AG04450 (cell line): ENCODE measurements at regions of chrX and their contacts with region 1.

Region 1: DNA sequence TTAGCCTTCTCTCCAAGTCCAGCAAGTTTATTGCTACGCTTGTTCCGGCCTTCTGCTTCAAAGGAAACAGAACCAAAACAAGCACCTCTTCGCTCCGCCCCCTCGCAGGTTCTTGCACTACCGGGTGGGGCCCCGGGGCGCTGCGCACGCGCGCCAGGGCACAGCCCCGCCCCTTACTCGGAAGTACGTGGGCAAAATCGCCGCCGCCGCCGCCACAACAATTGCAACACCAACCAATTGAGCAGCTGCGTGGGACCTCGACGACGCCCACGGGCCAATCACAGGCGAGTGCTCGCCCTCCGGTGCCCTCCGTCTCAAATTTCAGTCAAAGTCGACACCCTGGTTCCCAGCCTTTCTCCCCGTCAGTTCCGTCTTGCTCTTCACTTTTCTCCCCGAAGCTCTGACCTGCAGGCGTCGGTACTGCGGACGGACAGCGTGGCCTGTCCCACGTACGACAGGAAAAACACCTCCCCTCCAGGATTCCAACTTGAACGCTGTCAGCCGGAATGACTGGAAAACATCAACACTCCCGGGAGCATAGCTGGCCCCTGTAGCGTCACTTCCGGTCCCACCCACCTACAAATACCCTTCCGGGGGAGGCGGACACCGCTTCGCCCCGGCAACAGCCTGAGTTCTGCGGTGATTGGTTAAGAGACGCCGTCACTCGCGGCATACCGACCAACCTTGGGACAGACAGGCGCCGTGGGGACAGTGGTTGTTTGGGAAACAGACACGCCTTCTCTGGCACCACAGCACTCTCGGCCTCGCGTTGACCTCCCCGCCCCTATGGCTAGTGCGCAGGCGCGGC is 624 bp upstream of the OTUD5 start:
- DNase-seq: peak; percentile 96
- H3K4me3 ChIP-seq: peak overlapping the region; percentile 77
- H3K27ac ChIP-seq: peak overlapping the region; percentile 98
- H3K27me3 ChIP-seq: no peaks in the 10 kb centered on the region
- CTCF ChIP-seq: no peak

Region 2: GRCh38 chrX:48919947-48920717 is 37.9 kb before region 1 on chrX:
- CTCF ChIA-PET with region 1: no interaction called
- POLR2A ChIA-PET with region 1: interaction called, 12 read pairs
- DNase-seq: no peak
- H3K4me3 ChIP-seq: no peak overlapping the region
- H3K27ac ChIP-seq: no peak overlapping the region
- H3K27me3 ChIP-seq: no peaks in the 10 kb centered on the region
- CTCF ChIP-seq: no peak

Region 3: DNA sequence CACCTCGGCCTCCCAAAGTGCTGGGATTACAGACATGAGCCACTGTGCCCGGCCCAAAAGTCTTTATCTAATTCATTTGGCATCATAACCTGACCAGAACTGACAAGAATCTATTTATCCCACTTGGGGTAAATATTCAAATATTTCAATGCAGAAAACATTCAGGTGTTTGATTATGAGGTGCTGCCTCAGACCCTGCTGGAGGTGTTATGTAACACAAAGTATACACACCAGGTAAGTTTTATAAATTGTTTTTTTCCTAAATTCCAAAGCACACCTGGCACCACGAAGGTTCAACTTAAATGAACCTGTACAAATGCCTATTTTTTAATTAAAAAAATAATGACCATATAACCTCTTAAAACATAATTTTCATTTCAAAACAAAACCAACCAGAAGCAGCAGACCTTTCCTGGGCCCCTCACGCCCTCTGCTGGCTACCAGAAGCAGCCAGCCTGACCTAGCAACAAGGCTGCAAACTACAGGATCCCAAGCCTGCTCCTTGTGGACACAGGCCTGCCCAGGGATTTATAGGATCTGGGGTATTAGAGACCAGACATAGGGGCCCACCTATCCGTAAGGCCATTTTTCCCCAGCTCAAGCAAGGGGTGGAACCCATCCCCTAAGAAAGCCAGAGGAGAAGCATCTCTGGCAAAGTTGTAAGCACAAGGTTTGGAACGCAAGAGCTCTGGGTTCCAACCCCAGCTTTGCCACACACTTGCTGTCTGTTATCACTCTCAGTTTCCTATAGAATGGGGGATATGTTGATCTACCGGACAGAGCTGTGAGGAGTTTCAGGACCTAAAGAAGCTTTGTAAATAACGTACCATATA is 12.3 kb before region 1 on chrX:
- CTCF ChIA-PET with region 1: interaction called, 13 read pairs
- POLR2A ChIA-PET with region 1: no interaction called
- DNase-seq: peak; percentile 4
- H3K4me3 ChIP-seq: no peak overlapping the region
- H3K27ac ChIP-seq: no peak overlapping the region
- H3K27me3 ChIP-seq: no peaks in the 10 kb centered on the region
- CTCF ChIP-seq: peak; percentile 74

Region 4: DNA sequence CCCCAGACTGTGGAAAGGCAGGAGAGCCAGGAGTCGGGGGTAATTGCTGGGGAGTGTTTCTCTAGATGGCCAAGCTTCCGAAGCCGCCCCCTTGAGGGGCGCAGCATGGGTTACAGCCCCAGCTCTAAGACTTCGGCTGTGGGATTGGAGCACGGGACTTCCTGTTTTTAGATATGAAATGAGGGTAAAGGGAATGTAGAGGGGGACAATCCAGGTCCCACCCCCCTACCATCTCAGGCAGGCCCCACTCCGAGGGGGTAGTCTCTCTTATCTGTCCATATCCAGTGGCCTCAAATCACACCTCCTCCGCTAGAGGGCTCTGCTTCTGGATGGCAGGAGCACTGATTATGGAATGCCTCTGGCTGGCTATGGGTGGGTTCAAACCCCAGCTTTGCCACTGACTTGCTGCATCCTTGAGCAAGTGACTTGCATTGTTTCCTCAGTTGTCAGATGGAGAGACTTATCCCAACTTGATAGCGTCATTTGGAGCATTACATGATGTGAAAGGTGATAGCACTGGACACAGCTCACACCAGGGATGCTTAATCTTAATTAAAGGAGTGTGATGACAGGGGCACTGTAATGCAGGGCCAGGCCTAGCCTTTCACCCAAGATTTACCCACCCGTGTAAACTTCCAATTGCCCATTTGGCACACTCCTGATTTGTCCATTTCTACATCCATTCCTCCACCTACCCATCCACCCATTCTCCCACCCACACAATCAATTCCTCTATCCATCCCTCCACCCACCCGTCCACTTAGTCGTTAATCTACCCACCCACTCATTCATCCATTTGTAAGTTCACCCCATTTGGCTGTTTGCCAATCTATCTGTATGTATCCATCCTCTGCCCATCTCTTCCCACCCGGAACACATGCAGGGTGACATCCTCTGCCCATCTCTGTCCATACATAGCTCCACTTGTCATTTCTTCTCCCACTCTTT is 14.5 kb after region 1 on chrX:
- CTCF ChIA-PET with region 1: interaction called, 12 read pairs
- POLR2A ChIA-PET with region 1: interaction called, 9 read pairs
- DNase-seq: no peak
- H3K4me3 ChIP-seq: peak overlapping the region; percentile 53
- H3K27ac ChIP-seq: no peak overlapping the region
- H3K27me3 ChIP-seq: no peaks in the 10 kb centered on the region
- CTCF ChIP-seq: peak; percentile 59

Region 5: GRCh38 chrX:48992341-48992740 is 34.3 kb after region 1 on chrX:
- CTCF ChIA-PET with region 1: no interaction called
- POLR2A ChIA-PET with region 1: no interaction called
- DNase-seq: no peak
- H3K4me3 ChIP-seq: no peak overlapping the region
- H3K27ac ChIP-seq: no peak overlapping the region
- H3K27me3 ChIP-seq: no peaks in the 10 kb centered on the region
- CTCF ChIP-seq: no peak

Region 6: GRCh38 chrX:49043220-49043986 is 85.4 kb after region 1 on chrX and contains the start of gene TFE3:
- CTCF ChIA-PET with region 1: interaction called, 3 read pairs
- POLR2A ChIA-PET with region 1: interaction called, 20 read pairs
- DNase-seq: peak; percentile 97
- H3K4me3 ChIP-seq: peak within 1 kb of the TSS; percentile 79
- H3K27ac ChIP-seq: peak within 1 kb of the TSS; percentile 89
- H3K27me3 ChIP-seq: no peaks in the 10 kb centered on the region
- CTCF ChIP-seq: peak; percentile 56
- polyA plus RNA-seq, gene TFE3: 28.4 and 42.0 TPM in 2 replicates

Region 7: GRCh38 chrX:49162620-49163019 is 204.6 kb after region 1 on chrX and contains the start of gene MAGIX:
- CTCF ChIA-PET with region 1: no interaction called
- POLR2A ChIA-PET with region 1: no interaction called
- DNase-seq: no peak
- H3K4me3 ChIP-seq: peak within 1 kb of the TSS; percentile 50
- H3K27ac ChIP-seq: no peak within 1 kb of the TSS
- H3K27me3 ChIP-seq: no peaks in the 10 kb centered on the region
- CTCF ChIP-seq: no peak
- polyA plus RNA-seq, gene MAGIX: 0.40 and 0.82 TPM in 2 replicates